Right ventricle myocardium inferior (tissue), 1 donor: ENCODE measurements at regions of chr5 and their contacts with region 1.

Region 1: DNA sequence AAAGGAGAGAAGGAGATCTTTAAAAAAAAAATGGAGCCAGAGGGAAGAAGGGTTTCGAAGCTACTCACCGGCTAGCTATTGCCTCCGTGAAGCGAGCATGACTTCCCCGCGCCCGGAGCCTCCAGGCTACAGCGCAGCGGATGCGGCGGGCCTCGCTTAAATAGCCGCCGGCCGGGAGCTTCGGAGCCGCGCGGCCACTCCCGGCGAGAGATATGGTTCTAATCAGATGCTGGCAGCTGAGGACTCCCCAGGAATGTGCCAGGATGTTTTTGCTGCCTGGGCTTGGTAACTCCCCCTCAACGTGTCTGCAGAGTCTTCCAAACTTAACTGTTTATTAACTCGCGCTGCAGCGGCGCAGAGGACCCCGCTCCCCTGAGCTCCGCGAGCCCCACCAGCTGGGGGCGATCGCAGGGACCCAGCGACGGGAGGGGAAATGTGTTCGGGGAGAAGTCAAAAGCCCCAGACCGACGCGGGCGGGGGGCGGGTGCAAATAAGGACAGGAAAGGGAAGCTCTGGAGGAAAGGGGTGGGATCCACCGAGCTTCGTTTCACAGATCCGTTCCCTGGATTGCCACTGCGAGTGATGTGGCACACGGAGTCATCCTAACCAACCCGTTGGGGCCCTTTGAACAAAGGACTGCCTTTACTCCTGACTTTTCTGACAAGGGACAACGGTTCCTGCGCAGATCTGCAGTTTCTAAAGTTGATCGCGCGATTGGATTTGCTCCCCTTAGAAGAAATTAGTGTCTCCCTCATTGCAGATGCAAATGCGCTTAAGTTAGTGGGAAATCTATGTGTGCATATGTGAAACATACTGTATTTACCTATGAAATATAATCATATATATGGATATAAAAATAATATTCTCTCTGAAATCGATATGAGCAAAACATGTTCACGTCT is at the start of gene DAB2:
- DNase-seq: peak; percentile 93
- ATAC-seq: peak; percentile 79
- total RNA-seq, gene DAB2: 41.9 TPM

Region 2: DNA sequence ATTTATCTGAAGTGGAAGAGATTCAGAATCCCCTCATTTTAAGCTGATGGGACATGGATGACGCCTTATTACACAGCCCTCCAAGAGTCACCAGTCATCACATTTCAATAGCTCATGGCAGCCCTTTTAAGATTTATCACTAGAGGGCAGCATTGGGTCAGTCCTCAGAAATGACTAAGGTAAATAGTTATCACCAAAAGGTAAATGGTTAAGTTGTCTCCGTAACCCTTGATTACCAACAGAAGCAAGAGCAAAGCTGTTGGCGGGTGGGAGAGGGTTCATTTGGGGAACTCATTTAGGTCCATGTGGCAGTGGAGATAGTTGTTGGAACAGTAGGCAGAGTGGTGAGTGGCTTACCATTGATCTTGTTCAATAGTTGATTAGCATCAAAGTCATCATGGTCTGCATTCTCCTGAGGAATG is 48.7 kb before region 1 on chr5:
- intact Hi-C with region 1: loop called (anchors 5 kb)
- DNase-seq: no peak
- ATAC-seq: peak; percentile 38

Region 3: DNA sequence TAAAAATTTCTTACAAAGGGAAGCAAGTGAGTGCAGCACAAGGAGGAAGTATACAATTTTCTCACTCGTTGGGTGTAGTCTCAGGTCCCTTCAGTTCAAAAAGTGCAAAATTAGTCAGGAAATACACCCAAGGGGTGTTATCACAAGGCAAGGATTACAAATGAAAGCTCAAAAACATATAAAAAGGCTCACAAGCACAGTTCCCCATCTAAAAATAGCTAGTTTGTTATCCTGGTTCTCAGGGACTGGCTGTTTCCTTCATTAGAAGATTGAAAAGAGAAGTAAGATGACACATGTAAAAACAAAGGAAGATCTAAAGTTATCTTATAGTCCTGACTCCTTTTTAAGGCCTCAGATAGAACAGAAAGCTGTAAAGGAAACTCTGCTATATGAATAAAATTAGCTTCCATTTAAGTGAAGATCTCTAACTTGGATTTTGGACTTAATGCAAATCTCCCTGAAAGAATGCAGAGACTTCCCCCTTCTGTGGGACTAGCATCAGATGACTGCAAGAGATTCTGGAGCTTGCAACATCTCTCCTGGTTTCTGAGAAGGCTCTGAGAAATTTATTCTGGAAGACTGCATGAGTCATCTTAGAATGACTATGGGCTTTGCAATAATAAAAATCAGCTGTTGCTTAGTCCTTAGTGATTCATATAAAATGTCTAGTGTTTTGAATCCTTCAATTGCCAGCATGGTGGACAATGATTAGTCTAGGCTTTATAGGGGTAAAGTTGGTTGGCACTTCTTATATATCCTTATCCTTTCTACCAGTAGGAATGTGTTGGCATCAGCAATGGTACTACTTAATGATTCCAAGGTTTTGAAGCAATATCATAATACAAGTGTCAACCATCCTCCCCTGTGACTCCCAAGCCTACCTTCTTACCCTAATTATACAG is 25.6 kb before region 1 on chr5:
- intact Hi-C with region 1: loop called (anchors 2 kb)
- DNase-seq: no peak
- ATAC-seq: peak; percentile 94

Region 4: GRCh38 chr5:39503146-39503545 is 78.2 kb after region 1 on chr5:
- intact Hi-C with region 1: loop called (anchors 2 kb)
- DNase-seq: peak; percentile 57
- ATAC-seq: peak; percentile 77

Region 5: DNA sequence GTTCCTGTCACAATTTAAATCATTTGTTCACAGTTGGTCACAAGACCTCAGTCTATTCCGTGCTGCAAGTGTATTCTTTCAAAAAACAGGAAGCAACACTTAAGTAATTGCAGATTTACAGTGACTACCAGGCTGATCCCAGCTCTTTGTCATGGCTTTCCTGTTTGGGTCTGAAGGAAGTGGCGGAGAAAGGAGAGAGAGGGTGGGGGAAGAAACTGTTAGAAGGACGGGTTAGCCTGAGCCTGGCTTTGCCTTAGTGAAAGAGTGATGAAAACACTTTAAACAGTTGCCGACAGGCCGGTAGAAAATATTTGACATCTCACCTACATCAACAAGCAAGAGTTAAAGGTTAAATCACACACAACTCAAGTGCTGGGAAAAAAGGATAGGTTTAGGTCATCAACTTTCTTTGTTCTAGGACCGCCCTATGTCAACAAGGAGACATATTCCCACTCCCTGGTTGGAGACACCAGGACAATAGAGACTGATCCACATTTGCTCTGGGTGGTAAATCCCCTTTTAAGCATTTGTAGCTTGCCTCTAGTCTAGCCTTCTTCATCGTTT is 102.0 kb after region 1 on chr5:
- intact Hi-C with region 1: loop called (anchors 5 kb)
- DNase-seq: no peak
- ATAC-seq: peak; percentile 88

Region 6: GRCh38 chr5:39547553-39548154 is 122.7 kb after region 1 on chr5:
- intact Hi-C with region 1: loop called (anchors 2 kb)
- DNase-seq: no peak
- ATAC-seq: peak; percentile 66